Activated CD8-positive, alpha-beta T cell treated with anti-CD3 and anti-CD28 coated beads, Interleukin-2, amount 10 ng/mL, durations not matched to agents 7 days and 5 days (primary cell): ENCODE measurements at regions of chr15 and their contacts with region 1.

Region 1: GRCh38 chr15:85840065-85840801 is 45.5 kb upstream of the KLHL25 start:
- DNase-seq: peak; percentile 83
- ATAC-seq: peak; percentile 100
- H3K4me3 Mint-ChIP-seq: peak overlapping the region; percentile 56
- H3K27ac Mint-ChIP-seq: no peak overlapping the region
- H3K4me1 Mint-ChIP-seq: peaks cover 2% of the 10 kb centered on the region
- H3K27me3 Mint-ChIP-seq: peaks cover 1% of the 10 kb centered on the region

Region 2: DNA sequence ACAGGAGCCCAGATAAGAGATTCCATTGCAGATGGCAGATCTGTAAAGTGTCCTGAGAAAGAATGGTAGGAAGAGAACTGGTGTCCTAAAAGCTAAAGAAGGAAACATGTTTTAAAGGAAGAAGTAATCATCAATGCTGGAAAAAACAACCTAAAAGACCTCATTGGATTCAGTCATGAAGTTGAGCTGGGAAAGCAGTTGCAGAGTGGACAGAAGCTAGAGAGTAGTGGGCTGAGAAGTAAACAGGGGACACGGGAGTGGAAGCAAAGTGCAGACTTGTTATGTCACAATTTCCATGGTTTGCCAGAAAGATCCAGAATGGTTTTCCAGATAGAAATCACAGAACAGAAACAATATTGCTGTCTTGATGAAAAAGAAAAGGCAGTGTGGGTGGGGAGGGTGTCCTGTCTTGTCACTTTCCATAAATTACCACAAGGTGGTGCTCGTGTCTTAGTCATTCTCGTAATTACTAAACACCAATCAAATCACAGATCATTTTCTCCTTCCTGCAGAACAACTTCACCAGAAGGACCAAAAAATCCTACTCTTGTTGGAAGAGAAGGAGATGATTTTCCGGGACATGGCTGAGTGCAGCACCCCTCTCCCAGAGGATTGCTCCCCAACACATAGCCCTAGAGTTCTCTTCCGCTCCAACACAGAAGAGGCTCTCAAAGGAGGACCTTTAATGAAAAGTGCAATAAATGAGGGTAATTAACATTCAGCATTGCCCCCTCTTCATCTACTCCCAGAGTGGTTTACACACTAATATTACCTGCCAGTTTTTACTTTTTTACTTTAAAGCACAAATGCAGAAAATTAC is 110.0 kb before region 1 on chr15:
- CTCF ChIA-PET with region 1: interaction called, 98 read pairs
- POLR2A ChIA-PET with region 1: no interaction called
- DNase-seq: peak; percentile 67
- ATAC-seq: peak; percentile 80
- H3K4me3 Mint-ChIP-seq: no peak overlapping the region
- H3K27ac Mint-ChIP-seq: peak overlapping the region; percentile 54
- H3K4me1 Mint-ChIP-seq: peaks cover 8% of the 10 kb centered on the region
- H3K27me3 Mint-ChIP-seq: no peaks in the 10 kb centered on the region

Region 3: DNA sequence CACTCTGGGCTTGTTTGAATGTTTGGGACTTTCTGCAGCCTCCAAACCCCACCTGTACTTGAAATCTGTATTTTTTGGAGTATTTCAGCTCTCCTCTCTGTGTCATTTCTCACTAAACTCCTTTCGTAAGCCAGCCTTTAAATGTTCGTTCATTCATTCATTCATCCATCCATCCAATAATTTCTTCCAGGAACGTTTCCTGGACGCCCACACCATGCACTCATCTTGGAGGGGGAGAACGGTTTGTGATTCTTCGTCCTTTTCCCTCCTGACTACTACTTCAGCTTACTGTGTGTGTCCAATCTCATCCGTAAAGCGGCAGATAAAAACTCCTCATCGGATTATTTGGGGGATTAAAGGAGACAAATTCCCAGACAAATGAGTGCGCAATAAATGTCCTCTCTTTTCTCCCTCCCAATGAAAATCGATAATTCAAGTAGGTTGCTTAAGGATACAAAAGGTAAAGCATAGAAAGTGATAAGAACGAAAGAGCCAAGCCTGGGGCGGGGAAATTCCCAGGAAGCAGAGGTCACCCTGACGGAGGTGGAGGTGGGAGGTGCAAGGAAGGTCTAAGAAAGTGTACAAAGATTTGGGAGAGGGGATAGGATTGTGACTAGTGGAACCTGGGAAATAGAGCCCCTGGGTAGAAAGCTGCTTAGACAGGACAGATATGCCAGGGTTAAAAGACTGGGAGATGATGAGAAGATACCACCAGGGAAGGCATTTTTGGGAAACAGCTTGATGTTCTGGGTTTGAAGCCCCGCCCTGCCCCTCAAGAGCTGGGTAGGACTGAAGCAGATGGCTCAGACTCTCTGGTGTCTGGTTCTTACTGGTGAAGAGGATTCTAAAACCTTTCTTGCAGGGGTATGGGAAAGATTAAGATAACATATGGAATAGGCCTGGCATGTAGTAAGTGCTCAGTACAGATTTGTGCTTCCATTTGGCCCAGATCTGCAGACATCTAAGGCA is 44.6 kb before region 1 on chr15:
- CTCF ChIA-PET with region 1: interaction called, 11 read pairs
- POLR2A ChIA-PET with region 1: no interaction called
- DNase-seq: no peak
- ATAC-seq: no peak
- H3K4me3 Mint-ChIP-seq: peak overlapping the region; percentile 68
- H3K27ac Mint-ChIP-seq: no peak overlapping the region
- H3K4me1 Mint-ChIP-seq: peaks cover 27% of the 10 kb centered on the region
- H3K27me3 Mint-ChIP-seq: peaks cover 6% of the 10 kb centered on the region

Region 4: GRCh38 chr15:85810075-85810474 is 30.2 kb before region 1 on chr15:
- CTCF ChIA-PET with region 1: no interaction called
- POLR2A ChIA-PET with region 1: no interaction called
- DNase-seq: no peak
- ATAC-seq: no peak
- H3K4me3 Mint-ChIP-seq: no peak overlapping the region
- H3K27ac Mint-ChIP-seq: no peak overlapping the region
- H3K4me1 Mint-ChIP-seq: no peaks in the 10 kb centered on the region
- H3K27me3 Mint-ChIP-seq: no peaks in the 10 kb centered on the region

Region 5: GRCh38 chr15:85886309-85886811 is 46.1 kb after region 1 on chr15:
- CTCF ChIA-PET with region 1: no interaction called
- POLR2A ChIA-PET with region 1: no interaction called
- DNase-seq: no peak
- ATAC-seq: no peak
- H3K4me3 Mint-ChIP-seq: no peak overlapping the region
- H3K27ac Mint-ChIP-seq: no peak overlapping the region
- H3K4me1 Mint-ChIP-seq: no peaks in the 10 kb centered on the region
- H3K27me3 Mint-ChIP-seq: no peaks in the 10 kb centered on the region